H1 (cell line): ENCODE measurements at regions of chr3 and their contacts with region 1.

Region 1: GRCh38 chr3:138786788-138787278 is 47.9 kb downstream of the PIK3CB start:
- DNase-seq: no peak
- H3K4me3 ChIP-seq: no peak overlapping the region
- H3K27ac ChIP-seq: no peak overlapping the region
- H3K4me1 ChIP-seq: no peaks in the 10 kb centered on the region
- H3K27me3 ChIP-seq: no peaks in the 10 kb centered on the region
- CTCF ChIP-seq: no peak
- EP300 ChIP-seq: no peak
- POLR2A ChIP-seq: no peak
- RAD21 ChIP-seq: no peak

Region 2: GRCh38 chr3:138797508-138798038 is 10.7 kb after region 1 on chr3:
- CTCF ChIA-PET with region 1: interaction called, 11 read pairs
- POLR2A ChIA-PET with region 1: interaction called, 4 read pairs
- DNase-seq: no peak
- H3K4me3 ChIP-seq: no peak overlapping the region
- H3K27ac ChIP-seq: no peak overlapping the region
- H3K4me1 ChIP-seq: peaks cover 0 to 2% (median 1%) of the 10 kb centered on the region in 4 experiments; a peak in 1 of 7 replicates
- H3K27me3 ChIP-seq: no peaks in the 10 kb centered on the region
- CTCF ChIP-seq: no peak
- EP300 ChIP-seq: no peak
- POLR2A ChIP-seq: no peak
- RAD21 ChIP-seq: no peak